Ovary (tissue), 10 donors: ENCODE measurements at regions of chr12 and their contacts with region 1.

Region 1: GRCh38 chr12:68397566-68398158 is 65.5 kb upstream of the MDM1 start:
- DNase-seq: no peak
- H3K4me3 ChIP-seq: no peak overlapping the region
- H3K27ac ChIP-seq: no peak overlapping the region
- H3K4me1 ChIP-seq: no peaks in the 10 kb centered on the region
- H3K27me3 ChIP-seq: no peaks in the 10 kb centered on the region
- CTCF ChIP-seq: no peak
- EP300 ChIP-seq: no peak
- POLR2A ChIP-seq: no peak

Region 2: GRCh38 chr12:68958322-68958721 is 560.7 kb after region 1 on chr12:
- intact Hi-C with region 1: no loop called
- DNase-seq: no peak
- H3K4me3 ChIP-seq: no peak overlapping the region
- H3K27ac ChIP-seq: no peak overlapping the region
- H3K4me1 ChIP-seq: peaks cover 2% of the 10 kb centered on the region
- H3K27me3 ChIP-seq: no peaks in the 10 kb centered on the region
- CTCF ChIP-seq: no peak
- EP300 ChIP-seq: no peak
- POLR2A ChIP-seq: no peak

Region 3: DNA sequence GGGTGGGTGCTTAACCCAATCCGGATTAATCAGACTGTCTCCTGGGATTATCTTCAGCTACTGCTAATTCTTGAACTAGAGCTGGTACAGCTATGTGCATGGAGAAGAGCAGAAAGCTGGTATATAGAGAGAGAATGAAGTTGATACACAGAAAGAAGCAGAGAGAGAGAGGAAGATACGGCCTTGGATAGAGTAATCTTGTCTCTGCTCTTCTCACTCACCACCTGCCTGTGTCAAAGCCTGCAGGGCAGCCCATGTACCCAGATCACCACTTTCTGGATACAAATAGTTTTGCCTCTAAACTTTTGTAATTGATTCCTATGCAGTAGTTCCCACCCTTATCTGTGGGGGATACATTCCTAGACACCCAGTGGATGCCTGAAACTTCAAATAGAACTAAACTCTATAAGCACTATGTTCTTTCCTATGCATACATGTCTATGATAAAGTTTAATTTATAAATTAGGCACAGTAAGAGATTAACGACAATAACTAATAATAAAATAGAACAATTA is 1007.2 kb after region 1 on chr12:
- intact Hi-C with region 1: loop called in 1 of 4 experiments (anchors 5 kb)
- DNase-seq: no peak
- H3K4me3 ChIP-seq: no peak overlapping the region
- H3K27ac ChIP-seq: no peak overlapping the region
- H3K4me1 ChIP-seq: no peaks in the 10 kb centered on the region
- H3K27me3 ChIP-seq: no peaks in the 10 kb centered on the region
- CTCF ChIP-seq: no peak
- EP300 ChIP-seq: no peak
- POLR2A ChIP-seq: no peak